Ascending aorta (tissue), 2 donors: ENCODE measurements at regions of chr2 and their contacts with region 1.

Region 1: DNA sequence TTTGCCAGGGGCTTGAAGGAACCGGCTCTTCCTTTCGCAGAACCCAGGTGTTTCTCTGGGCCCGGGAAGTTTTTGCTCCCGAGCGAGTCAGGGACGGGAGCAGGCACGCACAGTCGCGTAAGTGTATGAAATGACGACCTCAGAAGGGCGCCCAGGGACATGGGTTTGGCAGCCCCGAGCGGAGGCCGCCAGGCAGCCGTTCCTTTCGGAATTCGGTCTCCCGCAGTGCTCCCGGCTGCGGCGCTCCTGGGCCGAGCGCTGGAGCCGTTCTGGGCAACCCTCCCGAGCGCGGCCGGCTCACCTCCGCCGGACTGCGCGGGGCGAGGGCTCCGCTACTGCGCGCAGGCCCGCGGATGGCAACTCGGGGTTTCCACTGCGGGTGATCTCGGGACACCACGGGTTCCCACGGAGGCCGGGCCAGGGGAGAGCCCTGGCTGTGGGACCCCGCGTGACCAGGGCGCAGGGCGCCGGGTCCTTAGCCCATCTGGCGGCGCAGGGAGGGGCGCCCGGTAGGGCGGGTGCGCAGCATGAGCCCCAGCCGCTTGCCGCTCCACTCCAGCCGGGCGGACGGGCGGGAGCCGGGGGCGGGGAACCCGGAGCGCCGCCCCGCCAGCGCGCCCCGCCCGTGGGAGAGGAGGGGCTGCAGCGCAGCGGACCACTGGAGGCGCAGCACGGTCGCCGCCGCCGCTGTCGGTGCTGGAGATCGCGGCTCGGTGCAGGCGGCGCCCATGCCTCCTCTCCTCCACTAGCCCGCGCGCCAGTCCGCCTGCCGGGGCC is at the start of gene OSBPL6:
- DNase-seq: peak; percentile 15 to 90
- H3K4me3 ChIP-seq: peak within 1 kb of the TSS; percentile 84 to 96
- H3K27ac ChIP-seq: peak within 1 kb of the TSS; percentile 88 to 90
- H3K4me1 ChIP-seq: peaks cover 0 to 7% of the 10 kb centered on the region in 2 donors
- H3K27me3 ChIP-seq: no peaks in the 10 kb centered on the region
- CTCF ChIP-seq: peak in 1 of 3 experiments; percentile 31
- total RNA-seq, gene OSBPL6: 1.4 TPM

Region 2: DNA sequence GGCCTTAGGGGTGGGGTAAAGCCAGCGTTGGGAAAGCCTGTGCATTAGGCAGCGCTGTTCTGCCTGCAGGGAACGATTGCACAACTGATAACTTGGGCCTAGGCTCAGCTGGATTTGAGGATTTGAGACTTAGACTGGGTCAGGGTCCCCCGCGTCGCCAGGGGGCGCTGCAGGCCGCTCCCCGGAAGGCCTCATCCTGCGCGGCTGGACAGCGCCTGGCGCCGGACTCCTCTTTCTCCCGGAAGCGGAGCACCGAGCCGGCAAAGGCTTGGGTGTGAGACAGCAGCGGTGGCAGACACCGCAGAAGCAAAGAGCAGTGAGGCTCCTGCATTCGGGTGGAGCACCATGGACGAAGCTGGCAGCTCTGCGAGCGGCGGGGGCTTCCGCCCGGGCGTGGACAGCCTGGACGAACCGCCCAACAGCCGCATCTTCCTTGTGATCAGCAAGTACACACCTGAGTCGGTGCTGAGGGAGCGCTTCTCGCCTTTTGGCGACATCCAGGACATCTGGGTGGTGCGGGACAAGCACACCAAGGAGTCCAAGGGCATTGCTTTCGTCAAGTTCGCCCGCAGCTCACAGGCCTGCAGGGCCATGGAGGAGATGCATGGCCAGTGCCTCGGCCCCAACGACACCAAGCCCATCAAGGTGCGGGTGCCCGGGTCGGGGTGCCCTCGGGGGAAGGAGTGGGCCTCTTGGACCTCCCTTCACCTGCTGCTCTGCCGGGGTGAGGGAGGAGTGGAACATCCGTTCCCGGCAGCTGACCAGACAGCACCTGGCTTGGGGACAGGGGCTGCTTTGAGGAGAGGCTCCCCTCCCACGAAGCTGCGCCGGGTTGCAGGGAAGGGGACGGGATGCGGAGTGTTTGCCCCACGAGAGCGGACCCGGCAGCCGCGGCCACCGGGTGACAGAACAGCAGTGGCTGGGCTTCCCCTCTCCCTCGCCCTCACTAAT is 81.5 kb before region 1 on chr2 and contains the start of gene RBM45:
- intact Hi-C with region 1: loop called (anchors 2 kb)
- DNase-seq: peak; percentile 54 to 96
- H3K4me3 ChIP-seq: peak within 1 kb of the TSS; percentile 84 to 94
- H3K27ac ChIP-seq: peak within 1 kb of the TSS; percentile 66 to 77
- H3K4me1 ChIP-seq: peaks cover 0 to 6% of the 10 kb centered on the region in 2 donors
- H3K27me3 ChIP-seq: no peaks in the 10 kb centered on the region
- CTCF ChIP-seq: peak; percentile 88 to 97 (median 94)
- total RNA-seq, gene RBM45: 2.8 TPM

Region 3: DNA sequence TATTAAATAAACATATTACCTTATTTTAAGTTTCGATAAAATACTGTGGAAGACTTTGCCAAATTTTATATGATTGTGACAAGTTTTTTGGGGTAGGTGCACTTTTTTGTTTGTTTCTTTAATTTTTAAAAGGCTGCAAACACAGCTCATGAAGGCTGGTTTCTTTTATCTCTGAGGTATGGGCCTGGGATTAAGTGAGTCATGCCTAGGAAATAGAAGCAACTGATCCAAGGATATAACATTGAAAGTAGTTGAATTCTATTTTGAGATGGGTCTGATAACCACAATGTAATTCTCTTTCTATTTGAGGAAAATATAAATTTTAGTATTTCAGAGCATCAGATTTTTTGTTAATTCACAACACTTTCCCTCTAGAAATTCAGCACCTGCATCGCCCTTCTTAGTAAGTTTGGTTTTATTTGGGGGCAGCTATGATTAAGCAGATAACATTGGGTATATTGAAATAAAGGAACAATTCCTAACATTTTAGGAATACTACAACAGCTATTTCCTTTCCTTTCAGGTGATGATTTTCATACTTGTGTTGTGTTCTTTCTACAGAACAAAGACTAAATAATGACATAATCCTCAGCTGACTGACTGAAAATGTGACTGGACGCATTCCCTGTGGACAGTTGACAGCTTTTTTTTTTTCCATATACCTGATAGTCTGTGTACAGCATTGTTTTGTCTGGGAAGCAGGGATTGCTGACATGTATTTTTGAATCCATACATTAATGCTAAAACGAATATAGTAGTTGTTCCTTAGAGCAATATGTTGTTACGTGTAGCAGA is 65.0 kb before region 1 on chr2:
- intact Hi-C with region 1: loop called (anchors 5 kb)
- DNase-seq: no peak
- H3K4me3 ChIP-seq: no peak overlapping the region
- H3K27ac ChIP-seq: no peak overlapping the region
- H3K4me1 ChIP-seq: no peaks in the 10 kb centered on the region
- H3K27me3 ChIP-seq: no peaks in the 10 kb centered on the region
- CTCF ChIP-seq: no peak

Region 4: GRCh38 chr2:178241844-178242551 is 48.0 kb after region 1 on chr2:
- intact Hi-C with region 1: loop called (anchors 2 kb)
- DNase-seq: peak; percentile 11 to 80
- H3K4me3 ChIP-seq: no peak overlapping the region
- H3K27ac ChIP-seq: peak overlapping the region in 1 of 2 donors; percentile 52
- H3K4me1 ChIP-seq: no peaks in the 10 kb centered on the region
- H3K27me3 ChIP-seq: no peaks in the 10 kb centered on the region
- CTCF ChIP-seq: no peak

Region 5: DNA sequence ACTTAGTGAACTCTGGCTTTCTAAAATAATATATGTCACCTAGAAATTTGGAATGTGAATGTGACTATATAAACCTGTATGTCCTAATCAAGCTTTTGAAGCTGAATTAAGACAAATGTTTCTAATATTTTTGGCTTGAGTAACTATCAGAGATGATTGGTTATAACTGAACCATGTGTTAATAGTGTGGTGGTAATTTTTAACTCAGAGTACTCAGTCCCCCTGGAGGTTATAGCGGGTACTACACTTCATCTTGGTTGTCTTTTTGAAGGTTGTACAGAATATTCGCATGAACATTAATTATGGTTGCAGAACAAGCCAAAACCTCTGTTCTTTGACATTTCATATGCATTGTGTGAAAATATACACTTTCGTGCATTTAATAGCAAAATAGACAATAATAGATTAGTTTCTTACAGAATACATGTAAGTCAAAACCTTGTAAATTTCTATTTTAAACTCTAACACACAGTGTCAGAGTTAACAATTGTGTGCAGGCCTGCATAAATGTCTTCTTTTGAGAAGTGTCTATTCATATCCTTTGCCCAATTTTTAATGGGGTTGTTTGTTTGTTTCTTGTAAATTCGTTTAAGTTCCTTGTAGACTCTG is 86.3 kb after region 1 on chr2:
- intact Hi-C with region 1: loop called (anchors 5 kb)
- DNase-seq: peak in 1 of 2 donors; percentile 65
- H3K4me3 ChIP-seq: no peak overlapping the region
- H3K27ac ChIP-seq: no peak overlapping the region
- H3K4me1 ChIP-seq: no peaks in the 10 kb centered on the region
- H3K27me3 ChIP-seq: no peaks in the 10 kb centered on the region
- CTCF ChIP-seq: peak; percentile 56 to 77 (median 76)

Region 6: DNA sequence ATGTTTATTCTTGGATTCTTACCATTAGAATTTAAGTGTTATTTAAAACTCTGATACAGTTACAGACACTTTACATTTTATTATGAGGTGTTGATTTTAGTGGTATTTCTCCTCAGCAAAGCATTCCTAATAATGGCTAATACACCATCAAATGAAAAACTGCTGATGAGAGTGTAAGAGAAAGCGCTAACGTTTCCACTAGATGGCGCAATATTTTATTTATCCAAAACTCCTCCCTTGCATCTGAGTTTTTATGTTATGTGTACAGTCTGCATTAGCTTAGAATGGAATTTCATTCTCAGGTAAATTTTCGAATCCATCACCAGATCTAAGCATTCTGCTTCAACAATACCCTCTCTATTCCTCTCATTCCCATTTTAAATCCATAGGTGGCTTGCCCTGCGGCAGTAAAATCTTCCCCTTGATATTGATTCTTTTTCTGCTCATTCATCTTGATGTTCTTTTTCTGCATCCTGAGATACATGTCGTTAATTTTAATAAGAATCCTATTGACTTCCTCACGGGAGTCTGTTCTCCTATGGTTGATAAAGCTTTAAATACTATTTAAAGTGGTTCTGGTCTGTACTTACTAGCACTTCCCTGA is 203.1 kb after region 1 on chr2:
- intact Hi-C with region 1: loop called (anchors 5 kb)
- DNase-seq: no peak
- H3K4me3 ChIP-seq: no peak overlapping the region
- H3K27ac ChIP-seq: no peak overlapping the region
- H3K4me1 ChIP-seq: no peaks in the 10 kb centered on the region
- H3K27me3 ChIP-seq: no peaks in the 10 kb centered on the region
- CTCF ChIP-seq: peak; percentile 12 to 53 (median 45)

Region 7: DNA sequence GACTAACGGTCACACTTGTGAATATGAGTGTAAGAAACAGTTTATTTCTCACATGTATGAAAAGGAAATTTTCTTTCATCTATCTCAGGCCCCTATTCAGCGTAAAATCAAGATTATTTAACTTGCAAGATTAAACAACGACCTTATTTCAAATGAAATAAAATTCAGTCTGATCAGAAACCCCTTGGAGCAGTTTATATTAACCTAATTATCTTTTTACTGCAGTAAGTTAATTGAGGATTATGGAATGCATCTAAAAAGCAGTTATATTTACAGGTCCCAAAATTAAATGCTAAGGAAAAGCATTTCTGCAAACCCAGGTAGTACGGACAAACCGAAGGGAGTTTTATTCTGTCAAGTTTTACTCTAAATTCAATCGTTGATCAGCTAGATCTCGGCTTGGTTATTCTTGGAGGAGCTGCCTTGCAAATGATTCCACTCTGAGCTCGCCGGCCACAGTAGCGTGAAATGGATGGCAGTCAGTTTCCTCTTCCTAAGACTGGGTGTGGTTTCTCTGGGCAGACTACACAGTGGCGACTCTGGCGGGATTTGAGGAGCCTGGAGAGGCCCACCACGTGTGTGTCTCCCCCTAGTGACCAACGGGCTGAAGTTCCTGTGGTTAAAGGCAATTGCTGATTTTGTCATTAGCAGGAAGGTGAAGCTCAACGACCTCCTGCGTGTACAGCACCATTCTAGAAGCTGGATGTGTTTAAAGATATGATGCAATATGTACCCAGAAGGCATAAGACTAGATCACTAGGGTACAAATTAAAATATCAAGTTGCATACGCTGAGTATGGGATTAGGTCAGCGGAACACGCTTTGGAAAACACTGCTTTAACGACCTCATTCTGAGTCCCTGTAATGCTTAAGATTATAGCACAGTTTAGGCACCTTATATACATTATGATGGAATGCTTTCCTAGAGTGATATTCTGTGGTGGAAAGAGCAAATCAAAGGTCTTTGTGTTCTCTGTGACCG is 220.5 kb after region 1 on chr2:
- intact Hi-C with region 1: loop called (anchors 2 kb)
- DNase-seq: peak; percentile 69 to 95
- H3K4me3 ChIP-seq: peak overlapping the region; percentile 79
- H3K27ac ChIP-seq: peak overlapping the region; percentile 96 to 97
- H3K4me1 ChIP-seq: no peaks in the 10 kb centered on the region
- H3K27me3 ChIP-seq: no peaks in the 10 kb centered on the region
- CTCF ChIP-seq: peak; percentile 74 to 94 (median 91)